ENCODE measurements at regions of chr11 and their contacts with region 1.

Region 1: DNA sequence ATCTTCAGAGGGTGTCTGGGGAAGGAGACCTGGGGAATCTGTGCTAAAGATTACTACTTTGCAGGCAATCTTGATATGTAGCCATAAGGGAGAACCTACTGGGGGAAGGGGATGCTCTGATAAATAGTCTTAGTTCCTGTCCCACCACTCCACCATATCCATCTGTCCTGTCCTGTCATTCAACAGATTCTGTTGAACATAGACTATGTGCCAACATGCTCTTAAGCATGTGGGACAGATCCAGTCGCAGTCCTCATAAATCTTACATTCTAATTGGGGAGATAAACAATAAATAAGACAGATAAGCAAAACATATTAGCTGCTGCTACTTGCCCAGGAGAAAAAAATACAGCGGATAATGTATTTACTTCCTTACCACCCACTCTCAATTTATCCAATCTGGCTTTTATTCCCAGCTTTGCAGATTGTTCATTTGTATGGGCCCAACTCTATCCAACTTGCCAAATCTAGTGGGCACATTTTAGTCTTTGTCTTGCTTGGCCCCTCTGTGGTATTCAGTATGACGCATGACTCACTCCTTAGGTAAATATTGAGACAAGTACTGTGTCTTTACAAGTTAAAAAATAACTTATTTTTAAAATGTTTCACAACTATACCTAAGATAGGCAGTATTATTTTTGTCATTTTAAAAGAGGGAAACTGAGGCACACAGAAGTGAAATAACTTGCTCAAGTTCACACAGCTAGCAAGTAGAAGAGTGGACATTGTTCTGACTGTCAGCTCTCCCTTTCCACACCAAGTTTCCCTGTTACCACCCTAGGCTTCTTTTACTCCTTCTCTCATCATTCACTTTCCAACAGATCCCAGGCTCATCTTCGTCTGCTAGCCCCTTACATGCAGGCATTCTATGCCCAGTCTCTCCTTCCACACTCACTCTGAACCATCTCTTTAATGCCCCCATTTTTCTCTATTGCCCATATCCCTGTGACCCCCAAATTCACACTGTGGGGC is 133.6 kb upstream of the SESN3 start:
- DNase-seq: peak in 1 of 3 donors; percentile 14
- H3K4me3 ChIP-seq: peak overlapping the region in 1 of 3 experiments; percentile 38
- H3K4me3 Mint-ChIP-seq: peak overlapping the region; percentile 13 to 75
- H3K27ac ChIP-seq: peak overlapping the region in 1 of 2 donors; percentile 46
- H3K27ac Mint-ChIP-seq: peak overlapping the region; percentile 55 to 89 (median 84)
- H3K4me1 ChIP-seq: peaks cover 64 to 70% of the 10 kb centered on the region in 2 donors
- H3K4me1 Mint-ChIP-seq: peaks cover 73% of the 10 kb centered on the region
- H3K27me3 ChIP-seq: no peaks in the 10 kb centered on the region
- H3K27me3 Mint-ChIP-seq: peaks cover 0 to 1% (median 1%) of the 10 kb centered on the region in 3 donors
- CTCF ChIP-seq: no peak

Region 2: GRCh38 chr11:95231127-95231880 is 133.3 kb before region 1 on chr11 and contains the start of gene SESN3:
- intact Hi-C with region 1: loop called in 1 of 2 experiments (anchors 10 kb)
- DNase-seq: peak; percentile 98
- H3K4me3 ChIP-seq: peak within 1 kb of the TSS; percentile 73 to 91 (median 90)
- H3K4me3 Mint-ChIP-seq: peak within 1 kb of the TSS in 1 of 2 donors; percentile 98
- H3K27ac ChIP-seq: peak within 1 kb of the TSS; percentile 83 to 92
- H3K27ac Mint-ChIP-seq: peak within 1 kb of the TSS; percentile 77 to 93 (median 87)
- H3K4me1 ChIP-seq: peaks cover 32 to 55% of the 10 kb centered on the region in 2 donors
- H3K4me1 Mint-ChIP-seq: peaks cover 29% of the 10 kb centered on the region
- H3K27me3 ChIP-seq: no peaks in the 10 kb centered on the region
- H3K27me3 Mint-ChIP-seq: no peaks in the 10 kb centered on the region
- CTCF ChIP-seq: no peak
- polyA plus RNA-seq, gene SESN3: 1.1 to 7.4 (median 1.4) TPM

Region 3: DNA sequence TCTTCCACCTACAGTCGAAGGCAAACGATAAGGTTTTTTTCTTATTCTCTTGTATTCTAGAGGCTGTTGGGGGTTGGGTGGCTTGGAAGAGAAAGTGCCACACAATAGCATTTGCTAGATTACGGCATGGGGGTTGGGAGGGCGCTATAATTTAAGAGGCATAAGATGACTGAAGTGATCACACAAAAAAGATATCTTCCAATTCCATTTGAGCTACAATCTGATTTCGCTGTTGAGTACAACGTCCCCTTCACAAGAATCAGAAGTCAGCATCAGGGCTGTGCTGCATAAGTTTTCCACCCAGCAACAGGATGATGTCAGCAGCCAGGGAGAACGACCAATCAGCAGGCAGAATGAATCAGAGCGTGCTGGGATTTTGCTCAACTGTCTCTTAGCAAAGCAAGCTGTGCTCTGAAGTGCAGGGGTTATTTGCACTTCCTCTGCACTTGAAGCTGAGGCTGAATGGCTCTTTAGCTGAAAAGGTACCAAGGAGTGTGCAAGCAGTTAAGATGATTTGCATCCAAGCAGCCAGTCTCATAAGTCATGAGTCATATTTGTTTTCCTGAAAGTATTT is 110.4 kb before region 1 on chr11:
- intact Hi-C with region 1: loop called in 1 of 2 experiments (anchors 10 kb)
- DNase-seq: peak; percentile 86 to 94 (median 94)
- H3K4me3 ChIP-seq: peak overlapping the region; percentile 37 to 74 (median 72)
- H3K4me3 Mint-ChIP-seq: peak overlapping the region; percentile 80 to 86
- H3K27ac ChIP-seq: peak overlapping the region; percentile 45 to 92
- H3K27ac Mint-ChIP-seq: peak overlapping the region; percentile 86 to 97 (median 92)
- H3K4me1 ChIP-seq: peaks cover 43 to 51% of the 10 kb centered on the region in 2 donors
- H3K4me1 Mint-ChIP-seq: peaks cover 59% of the 10 kb centered on the region
- H3K27me3 ChIP-seq: no peaks in the 10 kb centered on the region
- H3K27me3 Mint-ChIP-seq: no peaks in the 10 kb centered on the region
- CTCF ChIP-seq: no peak

Region 4: DNA sequence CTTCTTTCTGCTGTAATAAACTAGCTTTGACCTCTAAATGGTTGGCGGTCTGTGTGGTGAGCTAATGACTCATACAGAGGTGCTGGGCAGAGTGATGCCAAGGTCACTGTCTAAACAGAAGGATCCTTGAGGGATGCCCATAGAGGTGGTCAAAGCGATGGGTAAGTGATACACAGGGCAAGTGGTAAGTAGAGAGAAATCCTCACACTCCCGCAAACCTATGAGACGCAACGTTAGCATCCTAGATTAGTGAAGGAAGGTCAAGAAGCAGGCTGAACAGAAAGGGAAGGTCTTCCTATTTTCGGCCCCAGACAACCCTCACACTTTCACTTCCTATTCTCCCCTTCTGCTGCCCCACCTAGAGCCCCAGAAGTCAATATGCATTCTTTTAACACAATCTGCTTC is 68.0 kb before region 1 on chr11:
- intact Hi-C with region 1: loop called in 1 of 2 experiments (anchors 10 kb)
- DNase-seq: peak; percentile 63 to 71 (median 70)
- H3K4me3 ChIP-seq: peak overlapping the region in 2 of 3 experiments; percentile 19 to 58
- H3K4me3 Mint-ChIP-seq: peak overlapping the region; percentile 66 to 82
- H3K27ac ChIP-seq: peak overlapping the region in 1 of 2 donors; percentile 74
- H3K27ac Mint-ChIP-seq: peak overlapping the region; percentile 80 to 96 (median 89)
- H3K4me1 ChIP-seq: peaks cover 35 to 37% of the 10 kb centered on the region in 2 donors
- H3K4me1 Mint-ChIP-seq: peaks cover 41% of the 10 kb centered on the region
- H3K27me3 ChIP-seq: no peaks in the 10 kb centered on the region
- H3K27me3 Mint-ChIP-seq: peaks cover 0 to 4% (median 3%) of the 10 kb centered on the region in 3 donors
- CTCF ChIP-seq: no peak

Region 5: DNA sequence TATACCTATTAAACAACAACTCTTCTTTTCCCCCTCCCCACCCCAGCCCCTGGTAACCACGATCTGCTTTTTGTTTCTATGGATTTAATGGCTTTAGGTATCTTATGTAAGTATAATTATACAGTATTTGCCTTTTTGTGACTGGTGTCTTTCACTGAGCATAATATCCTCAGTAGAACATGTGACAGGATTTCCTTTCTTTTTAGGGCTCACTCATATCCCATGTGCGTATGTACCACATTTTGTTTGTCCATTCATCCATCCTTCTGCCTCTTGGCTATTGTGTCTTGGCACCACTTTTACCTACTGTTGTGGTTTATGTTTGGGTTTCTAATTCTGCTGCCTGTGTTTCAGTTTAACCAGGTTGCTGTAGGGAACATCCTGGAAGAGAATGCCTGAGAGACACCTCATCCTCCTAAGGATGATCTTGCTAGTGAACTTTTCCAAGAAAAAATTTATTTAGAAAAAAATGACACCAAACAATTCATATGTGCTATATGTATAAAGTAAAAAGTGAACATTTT is 56.0 kb before region 1 on chr11:
- intact Hi-C with region 1: no loop called
- DNase-seq: no peak
- H3K4me3 ChIP-seq: no peak overlapping the region
- H3K4me3 Mint-ChIP-seq: no peak overlapping the region
- H3K27ac ChIP-seq: no peak overlapping the region
- H3K27ac Mint-ChIP-seq: no peak overlapping the region
- H3K4me1 ChIP-seq: peaks cover 24 to 25% of the 10 kb centered on the region in 2 donors
- H3K4me1 Mint-ChIP-seq: peaks cover 31% of the 10 kb centered on the region
- H3K27me3 ChIP-seq: no peaks in the 10 kb centered on the region
- H3K27me3 Mint-ChIP-seq: peaks cover 0 to 2% (median 1%) of the 10 kb centered on the region in 3 donors
- CTCF ChIP-seq: no peak

Measured in CD14-positive monocyte (primary cell).